Head of caudate nucleus (tissue), 42 donors: ENCODE measurements at regions of chr10 and their contacts with region 1.

Region 1: DNA sequence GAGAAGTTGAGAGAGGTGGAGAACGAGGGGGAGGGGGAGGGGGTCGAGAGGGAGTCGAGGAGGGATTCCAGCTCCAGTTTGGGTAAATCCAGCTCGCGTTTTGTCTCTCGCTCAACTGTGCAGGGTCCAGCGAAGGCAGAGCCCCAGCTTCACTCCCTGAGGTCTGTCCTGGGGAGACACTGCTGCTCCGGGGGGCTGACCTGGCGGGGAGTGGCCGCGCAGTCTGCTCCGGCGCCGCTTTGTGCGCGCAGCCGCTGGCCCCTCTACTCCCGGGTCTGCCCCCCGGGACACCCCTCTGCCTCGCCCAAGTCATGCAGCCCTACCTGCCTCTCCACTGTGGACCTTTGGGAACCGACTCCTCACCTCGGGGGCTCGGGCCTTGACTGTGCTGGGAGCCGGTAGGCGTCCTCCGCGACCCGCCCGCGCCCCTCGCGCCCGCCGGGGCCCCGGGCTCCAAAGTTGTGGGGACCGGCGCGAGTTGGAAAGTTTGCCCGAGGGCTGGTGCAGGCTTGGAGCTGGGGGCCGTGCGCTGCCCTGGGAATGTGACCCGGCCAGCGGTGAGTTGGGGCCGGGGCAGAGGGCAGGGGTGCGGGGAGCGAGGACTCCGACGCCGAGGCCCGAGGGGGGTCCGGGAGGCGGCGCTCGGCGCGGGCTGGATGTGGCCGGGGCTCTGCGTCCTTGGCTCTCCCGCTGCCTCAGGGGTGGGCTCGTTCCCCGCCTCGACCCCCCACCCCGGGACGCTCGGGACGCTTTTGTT is at the start of gene TET1:
- DNase-seq: peak in 34 of 42 donors; percentile 2 to 77 (median 36)

Region 2: GRCh38 chr10:68598978-68599770 is 38.8 kb after region 1 on chr10:
- intact Hi-C with region 1: loop called (anchors 5 kb)
- DNase-seq: peak in 37 of 42 donors; percentile 7 to 65 (median 37)

Region 3: DNA sequence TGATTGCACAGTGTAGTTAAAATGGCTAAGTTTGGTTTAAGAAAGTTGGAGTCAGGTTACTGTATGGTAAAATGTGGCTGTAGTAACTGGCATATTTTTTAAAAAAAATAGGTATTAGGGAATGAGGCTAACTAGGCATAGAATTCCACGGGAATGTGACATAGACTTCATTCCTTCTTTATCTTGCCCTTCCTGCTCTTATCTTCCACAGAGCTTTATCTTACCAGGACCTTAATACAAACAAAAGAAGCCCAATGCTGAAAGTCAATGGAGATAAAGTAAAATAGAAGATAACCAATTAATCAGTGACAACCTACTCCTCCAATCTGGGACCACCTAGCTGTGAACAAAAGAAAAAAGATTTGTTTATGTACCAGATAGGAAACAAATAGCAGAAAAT is 57.9 kb after region 1 on chr10:
- intact Hi-C with region 1: no loop called
- DNase-seq: no peak